Activated CD8-positive, alpha-beta T cell treated with anti-CD3 and anti-CD28 coated beads, Interleukin-2, amount 10 ng/mL, durations not matched to agents 7 days and 5 days (primary cell): ENCODE measurements at regions of chr6 and their contacts with region 1.

Region 1: GRCh38 chr6:16964553-16965501 is 137.0 kb upstream of the STMND1 start:
- DNase-seq: peak; percentile 71
- ATAC-seq: peak; percentile 87
- H3K4me3 Mint-ChIP-seq: no peak overlapping the region
- H3K27ac Mint-ChIP-seq: no peak overlapping the region
- H3K4me1 Mint-ChIP-seq: peaks cover 5% of the 10 kb centered on the region
- H3K27me3 Mint-ChIP-seq: peaks cover 9% of the 10 kb centered on the region

Region 2: DNA sequence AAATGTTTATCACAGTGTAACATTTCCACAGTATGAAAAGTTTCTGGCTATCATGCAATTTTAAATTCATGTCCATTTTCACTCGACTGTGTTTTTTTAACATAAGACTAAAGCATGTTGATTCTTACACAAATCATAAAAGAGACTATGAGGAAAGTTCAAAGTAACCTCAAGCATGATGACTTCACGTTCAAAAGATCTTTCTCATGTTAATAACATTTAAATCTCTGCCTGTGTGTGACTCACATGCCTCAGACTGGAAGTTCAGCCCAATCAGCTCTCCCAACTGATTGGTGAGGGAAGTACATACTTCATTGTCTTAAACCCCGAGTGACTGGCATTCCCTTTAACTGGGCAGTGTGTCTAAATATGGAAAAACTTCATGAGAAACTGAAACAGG is 241.0 kb before region 1 on chr6:
- CTCF ChIA-PET with region 1: no interaction called
- POLR2A ChIA-PET with region 1: no interaction called
- DNase-seq: no peak
- ATAC-seq: no peak
- H3K4me3 Mint-ChIP-seq: no peak overlapping the region
- H3K27ac Mint-ChIP-seq: no peak overlapping the region
- H3K4me1 Mint-ChIP-seq: peaks cover 35% of the 10 kb centered on the region
- H3K27me3 Mint-ChIP-seq: no peaks in the 10 kb centered on the region

Region 3: DNA sequence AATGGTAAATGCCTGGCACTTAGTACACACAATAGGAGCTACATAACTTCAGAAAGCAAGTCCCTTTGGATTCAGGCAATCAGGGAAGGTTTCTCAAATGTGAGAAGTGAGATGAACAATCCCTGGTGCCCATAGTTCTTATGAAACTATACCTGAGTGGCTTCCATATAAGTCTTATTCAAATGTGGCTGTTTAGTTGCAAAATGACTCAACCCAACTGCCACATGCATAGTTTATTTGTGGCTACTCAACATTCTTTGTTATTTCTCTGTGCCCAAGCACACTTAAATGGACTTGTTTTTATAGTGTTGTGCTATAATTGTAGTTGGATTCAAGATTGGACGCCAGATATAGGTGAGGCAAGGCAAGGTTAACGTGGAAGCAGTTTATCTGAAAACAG is 109.8 kb before region 1 on chr6:
- CTCF ChIA-PET with region 1: no interaction called
- POLR2A ChIA-PET with region 1: no interaction called
- DNase-seq: no peak
- ATAC-seq: no peak
- H3K4me3 Mint-ChIP-seq: no peak overlapping the region
- H3K27ac Mint-ChIP-seq: no peak overlapping the region
- H3K4me1 Mint-ChIP-seq: peaks cover 11% of the 10 kb centered on the region
- H3K27me3 Mint-ChIP-seq: peaks cover 16% of the 10 kb centered on the region

Region 4: DNA sequence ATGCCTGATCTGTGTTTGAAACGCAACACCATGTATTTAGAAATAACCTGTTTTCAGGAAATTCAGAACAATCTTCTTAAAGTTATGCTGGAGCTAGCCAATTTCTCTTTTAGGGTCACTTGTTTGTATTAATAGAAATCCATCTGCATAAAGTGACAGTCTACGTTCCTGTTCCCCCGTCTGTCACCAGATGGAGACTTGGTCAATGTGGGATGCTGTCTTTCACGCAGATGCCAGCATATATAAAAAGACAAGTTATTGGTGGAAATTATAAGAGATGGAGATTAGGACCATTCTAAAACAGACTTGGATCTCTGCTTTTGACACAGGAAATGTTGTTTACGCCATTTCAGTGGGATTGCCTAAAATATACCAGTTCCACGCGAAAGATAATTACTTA is 25.5 kb before region 1 on chr6:
- CTCF ChIA-PET with region 1: no interaction called
- POLR2A ChIA-PET with region 1: no interaction called
- DNase-seq: no peak
- ATAC-seq: no peak
- H3K4me3 Mint-ChIP-seq: no peak overlapping the region
- H3K27ac Mint-ChIP-seq: no peak overlapping the region
- H3K4me1 Mint-ChIP-seq: no peaks in the 10 kb centered on the region
- H3K27me3 Mint-ChIP-seq: peaks cover 19% of the 10 kb centered on the region

Region 5: DNA sequence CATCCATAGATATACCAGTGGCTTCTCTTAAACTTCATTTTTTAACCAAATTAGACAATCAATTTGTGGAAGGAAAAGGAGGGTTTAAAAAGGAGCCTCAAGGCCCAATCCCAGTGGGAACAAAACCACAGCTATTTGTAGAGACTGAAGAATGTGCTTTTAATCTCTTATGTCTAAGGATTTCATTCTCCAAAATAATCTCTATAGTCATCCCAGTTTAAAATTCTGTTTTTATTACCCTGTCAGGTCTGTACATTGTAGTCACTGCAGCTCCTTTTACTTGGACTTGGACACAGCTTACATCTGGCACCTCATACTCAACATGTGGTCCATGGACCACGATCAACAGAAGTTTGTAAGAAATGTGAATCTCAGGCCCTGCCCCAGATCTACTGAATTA is 15.1 kb before region 1 on chr6:
- CTCF ChIA-PET with region 1: interaction called, 22 read pairs
- POLR2A ChIA-PET with region 1: no interaction called
- DNase-seq: no peak
- ATAC-seq: no peak
- H3K4me3 Mint-ChIP-seq: no peak overlapping the region
- H3K27ac Mint-ChIP-seq: no peak overlapping the region
- H3K4me1 Mint-ChIP-seq: peaks cover 3% of the 10 kb centered on the region
- H3K27me3 Mint-ChIP-seq: peaks cover 8% of the 10 kb centered on the region